Activated CD8-positive, alpha-beta T cell treated with anti-CD3 and anti-CD28 coated beads, Interleukin-2, amount 10 ng/mL, durations not matched to agents 7 days and 5 days (primary cell): ENCODE measurements at regions of chr12 and their contacts with region 1.

Region 1: DNA sequence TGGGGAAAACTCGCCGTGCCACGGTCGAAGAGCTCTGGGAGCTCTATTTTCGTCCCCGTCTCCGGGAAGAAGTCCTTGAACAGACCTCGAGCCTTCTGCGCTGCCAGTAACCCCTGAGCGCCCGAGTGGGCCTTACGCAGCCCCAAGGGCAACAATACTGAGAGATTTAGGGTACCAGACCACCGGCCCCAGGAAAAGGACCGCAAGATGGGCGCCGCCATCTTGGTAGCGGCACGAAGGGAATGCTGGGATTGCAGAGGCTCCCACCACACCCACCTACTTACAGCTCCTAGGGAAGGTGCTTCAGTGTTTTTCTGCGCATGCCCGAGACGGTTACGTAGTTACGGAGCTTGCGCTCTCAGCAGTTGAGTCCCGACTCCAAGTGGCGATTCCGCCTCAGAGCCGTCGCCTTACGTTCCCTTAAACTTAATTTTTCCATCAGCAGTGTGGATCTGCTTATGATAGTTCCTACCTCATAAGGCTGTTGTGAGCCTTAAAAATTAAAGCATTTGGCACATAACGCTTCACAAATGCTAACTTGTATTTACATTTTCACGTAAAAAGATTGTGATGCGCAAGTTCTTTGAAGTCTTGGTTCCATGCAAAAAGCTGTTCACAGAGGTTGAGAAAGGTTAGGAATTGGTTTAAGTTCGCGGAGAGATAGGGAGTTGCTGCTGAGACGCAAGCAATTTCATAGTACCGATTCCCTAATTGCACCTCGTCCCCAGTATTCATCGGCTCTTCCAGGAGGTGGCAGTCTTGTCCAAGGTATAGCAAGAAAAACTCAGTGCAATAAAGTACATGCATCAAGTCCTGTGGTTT is at the start of gene YARS2:
- DNase-seq: peak; percentile 93
- ATAC-seq: peak; percentile 94
- H3K4me3 Mint-ChIP-seq: peak within 1 kb of the TSS; percentile 93
- H3K27ac Mint-ChIP-seq: peak within 1 kb of the TSS; percentile 78
- H3K4me1 Mint-ChIP-seq: peaks cover 20% of the 10 kb centered on the region
- H3K27me3 Mint-ChIP-seq: no peaks in the 10 kb centered on the region
- total RNA-seq, gene YARS2: 19.4 to 20.2 TPM

Region 2: DNA sequence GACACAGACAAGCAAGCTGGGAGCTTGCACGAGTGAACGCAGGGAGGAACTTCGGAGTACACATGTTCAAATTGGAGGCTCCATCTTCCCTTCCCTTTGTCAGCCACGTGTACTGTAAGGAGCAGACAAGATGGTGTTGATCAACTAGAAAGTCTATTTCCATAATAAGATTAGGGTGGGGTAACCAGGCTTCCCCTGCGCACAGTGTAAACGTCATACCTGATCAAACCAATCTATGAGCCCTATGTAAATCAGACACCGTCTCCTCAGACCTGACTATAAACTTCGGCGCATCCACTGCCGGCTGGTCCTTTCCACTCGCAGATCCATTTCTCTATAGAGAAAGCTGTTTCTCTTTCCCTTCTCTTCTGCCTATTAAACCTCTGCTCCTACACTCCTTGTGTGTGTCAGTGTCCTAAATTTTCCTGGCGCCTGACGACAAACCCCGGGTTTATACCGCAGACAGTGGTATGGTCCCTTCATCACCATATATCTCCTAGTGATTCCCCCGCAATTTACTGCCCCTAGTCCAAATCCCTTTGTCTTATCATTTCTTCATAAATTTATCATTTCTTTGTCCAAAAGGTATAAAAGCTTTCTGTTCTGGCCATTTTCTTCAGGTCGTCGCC is 1103.9 kb before region 1 on chr12:
- CTCF ChIA-PET with region 1: interaction called, 20 read pairs
- POLR2A ChIA-PET with region 1: no interaction called
- DNase-seq: no peak
- ATAC-seq: no peak
- H3K4me3 Mint-ChIP-seq: no peak overlapping the region
- H3K27ac Mint-ChIP-seq: no peak overlapping the region
- H3K4me1 Mint-ChIP-seq: peaks cover 12% of the 10 kb centered on the region
- H3K27me3 Mint-ChIP-seq: no peaks in the 10 kb centered on the region

Region 3: GRCh38 chr12:32679091-32679919 is 76.6 kb before region 1 on chr12 and contains the start of gene DNM1L:
- CTCF ChIA-PET with region 1: interaction called, 7 read pairs
- POLR2A ChIA-PET with region 1: interaction called, 11 read pairs
- DNase-seq: peak; percentile 94
- ATAC-seq: peak; percentile 99
- H3K4me3 Mint-ChIP-seq: peak within 1 kb of the TSS; percentile 85
- H3K27ac Mint-ChIP-seq: peak within 1 kb of the TSS; percentile 87
- H3K4me1 Mint-ChIP-seq: peaks cover 29% of the 10 kb centered on the region
- H3K27me3 Mint-ChIP-seq: no peaks in the 10 kb centered on the region
- total RNA-seq, gene DNM1L: 59.5 to 64.7 TPM

Region 4: GRCh38 chr12:32708926-32709325 is 46.9 kb before region 1 on chr12:
- CTCF ChIA-PET with region 1: interaction called, 10 read pairs
- POLR2A ChIA-PET with region 1: no interaction called
- DNase-seq: no peak
- ATAC-seq: no peak
- H3K4me3 Mint-ChIP-seq: no peak overlapping the region
- H3K27ac Mint-ChIP-seq: no peak overlapping the region
- H3K4me1 Mint-ChIP-seq: peaks cover 16% of the 10 kb centered on the region
- H3K27me3 Mint-ChIP-seq: no peaks in the 10 kb centered on the region

Region 5: DNA sequence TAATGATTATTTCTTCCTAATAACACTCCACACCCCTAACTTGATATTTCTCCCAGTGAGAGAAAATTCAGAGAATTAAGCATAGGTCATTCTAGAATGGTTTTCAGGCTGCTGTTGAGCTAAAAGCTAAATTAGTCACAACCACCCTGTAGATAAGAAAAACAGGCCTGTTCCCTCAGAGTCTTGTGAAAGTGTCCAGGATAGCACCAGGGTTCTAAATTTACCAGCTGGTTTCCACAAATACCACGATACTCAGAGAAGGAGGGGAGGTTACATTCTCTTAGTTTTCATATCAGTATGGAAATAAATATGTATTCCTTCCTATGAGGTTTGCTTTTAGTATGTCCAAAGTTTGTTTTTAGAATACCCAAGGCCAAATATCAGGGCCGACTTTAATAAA is 65.8 kb after region 1 on chr12:
- CTCF ChIA-PET with region 1: no interaction called
- POLR2A ChIA-PET with region 1: no interaction called
- DNase-seq: no peak
- ATAC-seq: no peak
- H3K4me3 Mint-ChIP-seq: no peak overlapping the region
- H3K27ac Mint-ChIP-seq: no peak overlapping the region
- H3K4me1 Mint-ChIP-seq: no peaks in the 10 kb centered on the region
- H3K27me3 Mint-ChIP-seq: no peaks in the 10 kb centered on the region

Region 6: GRCh38 chr12:32918890-32919801 is 163.3 kb after region 1 on chr12:
- CTCF ChIA-PET with region 1: interaction called, 14 read pairs
- POLR2A ChIA-PET with region 1: no interaction called
- DNase-seq: no peak
- ATAC-seq: no peak
- H3K4me3 Mint-ChIP-seq: no peak overlapping the region
- H3K27ac Mint-ChIP-seq: no peak overlapping the region
- H3K4me1 Mint-ChIP-seq: no peaks in the 10 kb centered on the region
- H3K27me3 Mint-ChIP-seq: no peaks in the 10 kb centered on the region

Region 7: DNA sequence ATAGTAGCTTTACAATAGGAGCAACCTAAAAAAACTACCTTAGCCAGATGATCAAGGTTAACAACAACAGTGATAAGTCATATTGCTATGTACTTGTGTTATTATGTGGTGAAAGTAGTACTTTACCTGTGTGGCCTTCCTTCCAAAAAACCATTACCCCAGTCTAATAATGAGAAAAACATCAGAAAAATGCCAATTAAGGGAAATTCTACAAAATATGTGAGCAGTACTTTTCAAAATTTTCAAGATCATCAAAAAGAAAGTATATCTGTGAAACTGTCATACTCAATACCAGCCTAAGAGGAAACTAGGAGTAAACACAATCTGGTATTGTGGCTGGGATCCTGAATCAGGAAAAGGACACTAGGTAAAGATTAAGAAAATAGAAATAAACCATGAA is 306.0 kb after region 1 on chr12:
- CTCF ChIA-PET with region 1: no interaction called
- POLR2A ChIA-PET with region 1: no interaction called
- DNase-seq: no peak
- ATAC-seq: no peak
- H3K4me3 Mint-ChIP-seq: no peak overlapping the region
- H3K27ac Mint-ChIP-seq: no peak overlapping the region
- H3K4me1 Mint-ChIP-seq: no peaks in the 10 kb centered on the region
- H3K27me3 Mint-ChIP-seq: no peaks in the 10 kb centered on the region